ENCODE measurements at regions of chr15 and their contacts with region 1.

Region 1: GRCh38 chr15:101008158-101009139 is 89.3 kb downstream of the LRRK1 start:
- DNase-seq: peak; percentile 72
- ATAC-seq: peak; percentile 91
- H3K4me3 ChIP-seq: peak overlapping the region; percentile 43 to 58
- H3K27ac ChIP-seq: 0 out of 2 replicates have a peak overlapping the region, but pooled peaks have one; percentile 24
- H3K4me1 ChIP-seq: peaks cover 11 to 25% of the 10 kb centered on the region in 2 experiments; a peak in 3 of 4 replicates
- H3K27me3 ChIP-seq: no peaks in the 10 kb centered on the region
- CTCF ChIP-seq: peak; percentile 81 to 99 (median 89)
- POLR2A ChIP-seq: no peak
- RAD21 ChIP-seq: peak; percentile 22; the same call in 1 of the 2 replicates

Region 2: DNA sequence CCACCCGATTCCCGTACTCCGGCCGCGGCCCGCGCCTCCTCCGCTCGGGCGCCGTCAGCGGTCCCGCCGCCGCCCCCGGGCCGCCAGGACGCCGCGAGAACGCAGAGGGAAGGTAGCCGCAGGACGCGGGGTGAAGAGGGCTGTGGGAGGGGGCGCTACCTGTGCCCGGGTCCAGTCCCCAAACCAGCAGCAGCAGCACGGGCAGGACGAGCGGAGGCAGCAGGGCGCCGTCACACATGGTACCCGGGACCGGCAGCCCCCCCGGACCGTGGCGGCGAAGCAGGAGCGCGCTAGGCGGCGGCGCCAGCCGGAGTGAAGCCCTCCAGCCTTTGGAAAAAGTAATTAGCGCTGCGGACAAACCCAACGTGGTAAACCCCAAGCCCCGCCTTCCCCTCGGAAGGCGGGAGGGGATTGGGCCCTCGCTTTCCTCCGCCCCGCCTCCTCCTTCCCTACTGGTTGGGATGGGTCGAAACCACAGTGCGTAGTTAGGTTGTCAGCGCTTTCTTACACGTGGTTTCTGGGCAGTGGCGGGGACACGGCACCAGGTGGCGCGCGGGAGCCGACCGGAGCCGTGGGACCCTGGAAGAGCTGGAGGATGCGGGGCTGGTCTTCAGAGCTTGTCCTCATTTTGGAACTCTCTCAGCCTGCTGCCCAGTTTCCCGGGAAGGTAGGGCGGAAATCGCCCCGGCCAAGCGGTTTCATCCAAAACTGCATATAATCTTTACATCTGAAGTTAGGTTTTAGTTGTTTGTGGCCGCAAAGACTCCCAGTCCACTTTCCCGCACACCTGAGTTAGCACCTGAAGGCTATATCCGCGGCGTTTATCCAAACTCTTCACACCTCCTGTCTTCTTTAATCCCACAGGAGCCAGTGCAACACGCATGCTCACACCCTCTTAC is 666.5 kb before region 1 on chr15 and contains the start of gene ADAMTS17:
- CTCF ChIA-PET with region 1: interaction called, 4 read pairs
- POLR2A ChIA-PET with region 1: no interaction called
- RAD21 ChIA-PET with region 1: no interaction called
- intact Hi-C with region 1: loop called (anchors 2 kb)
- DNase-seq: peak; percentile 94
- ATAC-seq: peak; percentile 95
- H3K4me3 ChIP-seq: peak within 1 kb of the TSS; percentile 61 to 68
- H3K27ac ChIP-seq: peak within 1 kb of the TSS; percentile 30; the same call in 1 of the 2 replicates
- H3K4me1 ChIP-seq: peaks cover 3 to 13% of the 10 kb centered on the region in 2 experiments; a peak in 2 of 4 replicates
- H3K27me3 ChIP-seq: no peaks in the 10 kb centered on the region
- CTCF ChIP-seq: peak; percentile 78 to 86 (median 86)
- POLR2A ChIP-seq: peak; percentile 41
- RAD21 ChIP-seq: peak; percentile 70
- total RNA-seq, gene ADAMTS17: 4.2 TPM

Region 3: DNA sequence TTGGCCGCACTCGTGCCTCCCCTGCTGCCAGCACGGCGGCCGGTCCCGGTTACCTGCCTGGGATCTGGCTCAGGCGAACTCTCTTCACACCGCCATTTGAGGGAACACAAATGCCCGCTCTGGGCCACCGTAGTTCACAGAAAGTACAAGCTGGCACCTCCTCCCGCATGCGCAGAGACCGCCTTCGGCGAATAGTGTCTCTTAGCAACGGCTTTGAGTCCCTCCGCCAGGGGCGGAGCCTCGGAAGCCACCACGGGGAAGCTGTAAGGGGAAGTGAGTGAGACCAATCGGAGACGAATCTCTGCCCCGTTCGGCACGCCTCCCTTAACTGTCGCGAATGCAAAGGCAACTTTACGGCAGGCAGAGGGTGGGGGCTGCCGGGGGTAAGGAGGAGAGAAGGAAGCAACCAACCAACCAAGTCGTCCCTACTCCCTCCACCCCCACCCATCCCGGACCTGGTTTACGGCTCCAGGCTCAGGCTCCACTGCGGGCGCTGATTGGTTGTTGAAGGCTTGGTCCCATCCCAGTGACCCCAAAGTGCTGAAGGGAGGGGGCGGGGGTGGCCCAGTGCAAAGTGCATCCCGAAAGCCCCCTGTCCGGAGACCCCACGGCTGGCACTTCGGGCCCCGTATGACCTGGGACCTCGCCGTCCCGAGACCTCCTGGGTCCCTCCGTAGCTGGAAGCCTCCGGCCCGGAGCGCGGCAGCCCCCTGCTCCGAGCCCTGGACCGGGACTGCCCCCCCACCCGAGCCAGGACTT is 406.2 kb before region 1 on chr15 and contains the starts of genes ASB7 and LINS1:
- CTCF ChIA-PET with region 1: interaction called, 10 read pairs
- POLR2A ChIA-PET with region 1: no interaction called
- RAD21 ChIA-PET with region 1: no interaction called
- intact Hi-C with region 1: no loop called
- DNase-seq: peak; percentile 100
- ATAC-seq: peak; percentile 94
- H3K4me3 ChIP-seq: peak within 1 kb of the TSS; percentile 73 to 98
- H3K27ac ChIP-seq: peak within 1 kb of the TSS; percentile 62
- H3K4me1 ChIP-seq: peaks cover 14 to 16% of the 10 kb centered on the region in 2 experiments
- H3K27me3 ChIP-seq: no peaks in the 10 kb centered on the region
- CTCF ChIP-seq: no peak
- POLR2A ChIP-seq: peak; percentile 32
- RAD21 ChIP-seq: no peak
- total RNA-seq, gene ASB7: 16.6 TPM
- total RNA-seq, gene LINS1: 14.7 TPM

Region 4: DNA sequence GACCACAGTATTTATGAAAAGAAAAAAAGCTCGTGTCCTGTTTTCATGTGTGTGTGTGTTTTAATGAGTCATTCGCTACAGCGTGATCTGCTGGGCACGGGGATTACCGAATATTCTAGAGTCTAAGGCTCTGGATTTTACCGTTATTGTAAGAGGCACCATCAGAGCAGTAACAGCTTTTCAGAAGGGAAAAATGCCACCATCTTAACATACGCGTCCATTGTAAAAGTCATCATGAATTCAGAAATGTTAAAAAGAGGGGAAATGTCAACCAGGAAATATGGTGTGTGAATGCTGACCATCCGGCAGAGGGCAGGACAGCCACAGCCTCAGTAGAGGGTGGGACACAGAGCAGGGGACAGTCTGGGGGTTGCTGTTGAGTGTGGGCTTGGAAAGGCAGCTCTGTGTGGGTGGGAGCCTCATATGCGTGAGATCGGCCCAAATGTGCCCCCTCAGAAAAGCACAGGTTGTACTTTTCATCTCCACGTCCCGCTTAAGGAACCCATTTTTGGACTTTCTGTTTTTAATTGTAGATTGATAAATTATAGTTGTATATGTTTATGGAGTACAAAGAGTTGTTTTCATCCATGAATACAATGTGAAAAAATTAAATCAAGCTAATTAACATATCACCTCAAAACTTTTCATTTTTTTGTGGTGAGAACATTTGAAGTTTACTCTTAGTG is 336.4 kb before region 1 on chr15:
- CTCF ChIA-PET with region 1: interaction called, 4 read pairs
- POLR2A ChIA-PET with region 1: no interaction called
- RAD21 ChIA-PET with region 1: no interaction called
- intact Hi-C with region 1: loop called (anchors 2 kb)
- DNase-seq: peak; percentile 37
- ATAC-seq: peak; percentile 98
- H3K4me3 ChIP-seq: no peak overlapping the region
- H3K27ac ChIP-seq: peak overlapping the region; percentile 6; the same call in 1 of the 2 replicates
- H3K4me1 ChIP-seq: peaks cover 0 to 29% of the 10 kb centered on the region in 2 experiments; a peak in 2 of 4 replicates
- H3K27me3 ChIP-seq: no peaks in the 10 kb centered on the region
- CTCF ChIP-seq: peak; percentile 77 to 88 (median 87)
- POLR2A ChIP-seq: no peak
- RAD21 ChIP-seq: peak; percentile 96

Region 5: DNA sequence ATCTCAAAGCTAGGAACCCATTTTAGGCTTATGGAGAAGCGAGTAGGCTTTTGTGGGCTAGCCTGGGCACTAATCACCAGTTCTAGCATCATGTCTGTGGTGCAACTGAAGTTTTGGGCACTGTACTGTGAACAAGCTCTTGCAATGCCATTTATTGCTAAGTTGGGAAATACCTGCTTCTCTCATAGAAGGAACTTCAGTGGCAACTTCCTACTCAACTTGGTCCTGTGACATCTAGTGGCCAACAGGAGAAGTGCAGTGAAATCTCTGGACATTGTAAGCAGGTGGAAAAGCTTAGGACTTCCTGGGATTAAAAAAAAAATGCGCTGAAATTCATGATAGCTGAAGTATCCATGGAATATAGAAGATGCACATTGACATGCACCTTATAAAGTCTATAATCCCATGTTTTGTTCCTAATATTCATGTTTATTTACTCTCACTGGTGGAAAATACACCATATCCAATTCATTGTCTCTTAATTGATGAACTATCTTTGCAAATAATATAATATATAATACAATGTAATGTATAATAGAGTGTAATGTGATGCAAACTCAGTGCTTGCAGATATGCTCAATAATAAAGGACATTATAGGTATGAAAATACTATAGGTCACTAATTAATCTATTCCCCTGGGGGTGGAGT is 135.3 kb before region 1 on chr15:
- CTCF ChIA-PET with region 1: interaction called, 5 read pairs
- POLR2A ChIA-PET with region 1: no interaction called
- RAD21 ChIA-PET with region 1: no interaction called
- intact Hi-C with region 1: loop called (anchors 2 kb)
- DNase-seq: peak; percentile 83
- ATAC-seq: peak; percentile 60
- H3K4me3 ChIP-seq: no peak overlapping the region
- H3K27ac ChIP-seq: no peak overlapping the region
- H3K4me1 ChIP-seq: peaks cover 12 to 36% of the 10 kb centered on the region in 2 experiments
- H3K27me3 ChIP-seq: no peaks in the 10 kb centered on the region
- CTCF ChIP-seq: peak; percentile 82 to 94 (median 83)
- POLR2A ChIP-seq: no peak
- RAD21 ChIP-seq: peak; percentile 85

Region 6: DNA sequence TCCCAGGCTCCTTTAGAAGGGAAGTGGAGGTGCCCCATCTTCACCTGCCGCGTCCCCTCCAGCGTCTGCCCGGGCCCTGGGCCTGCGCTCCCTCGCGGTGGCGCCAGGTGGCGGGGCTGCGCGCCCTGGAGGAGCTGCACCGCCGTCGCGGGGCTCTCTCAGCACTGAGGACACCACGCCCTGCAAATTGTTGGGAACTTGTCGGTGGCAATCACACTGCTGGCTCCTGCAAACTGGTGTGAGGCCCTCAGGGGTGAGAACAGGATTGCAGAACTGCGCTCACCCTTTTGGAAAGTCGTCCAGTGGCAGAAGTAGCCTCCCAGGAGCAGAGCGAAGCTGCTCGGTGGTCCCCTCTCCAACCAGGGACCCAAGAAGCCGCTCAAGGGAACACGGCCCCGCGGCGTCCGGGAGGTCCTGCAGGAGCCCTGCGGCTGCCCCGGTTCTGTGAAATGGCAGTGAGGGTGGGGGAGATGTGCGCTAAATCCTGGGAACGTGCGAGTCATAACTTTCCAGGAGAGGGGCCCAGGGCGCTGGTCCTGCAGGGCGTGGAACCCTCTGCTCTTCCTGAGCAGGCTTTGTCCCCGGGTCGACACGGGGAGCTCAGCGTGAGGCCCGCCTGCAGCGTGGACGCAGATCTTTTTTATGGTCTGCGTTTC is 90.3 kb before region 1 on chr15:
- CTCF ChIA-PET with region 1: interaction called, 112 read pairs
- POLR2A ChIA-PET with region 1: interaction called, 4 read pairs
- RAD21 ChIA-PET with region 1: interaction called, 5 to 11 read pairs
- intact Hi-C with region 1: loop called (anchors 1 kb)
- DNase-seq: peak; percentile 67
- ATAC-seq: peak; percentile 85
- H3K4me3 ChIP-seq: peak overlapping the region; percentile 66 to 83
- H3K27ac ChIP-seq: peak overlapping the region; percentile 86
- H3K4me1 ChIP-seq: peaks cover 0 to 27% of the 10 kb centered on the region in 2 experiments; a peak in 1 of 4 replicates
- H3K27me3 ChIP-seq: no peaks in the 10 kb centered on the region
- CTCF ChIP-seq: peak; percentile 86 to 96 (median 90)
- POLR2A ChIP-seq: peak; percentile 25
- RAD21 ChIP-seq: peak; percentile 69

Measured in HCT116 (cell line).